ENCODE measurements at regions of chr4 and their contacts with region 1.

Region 1: DNA sequence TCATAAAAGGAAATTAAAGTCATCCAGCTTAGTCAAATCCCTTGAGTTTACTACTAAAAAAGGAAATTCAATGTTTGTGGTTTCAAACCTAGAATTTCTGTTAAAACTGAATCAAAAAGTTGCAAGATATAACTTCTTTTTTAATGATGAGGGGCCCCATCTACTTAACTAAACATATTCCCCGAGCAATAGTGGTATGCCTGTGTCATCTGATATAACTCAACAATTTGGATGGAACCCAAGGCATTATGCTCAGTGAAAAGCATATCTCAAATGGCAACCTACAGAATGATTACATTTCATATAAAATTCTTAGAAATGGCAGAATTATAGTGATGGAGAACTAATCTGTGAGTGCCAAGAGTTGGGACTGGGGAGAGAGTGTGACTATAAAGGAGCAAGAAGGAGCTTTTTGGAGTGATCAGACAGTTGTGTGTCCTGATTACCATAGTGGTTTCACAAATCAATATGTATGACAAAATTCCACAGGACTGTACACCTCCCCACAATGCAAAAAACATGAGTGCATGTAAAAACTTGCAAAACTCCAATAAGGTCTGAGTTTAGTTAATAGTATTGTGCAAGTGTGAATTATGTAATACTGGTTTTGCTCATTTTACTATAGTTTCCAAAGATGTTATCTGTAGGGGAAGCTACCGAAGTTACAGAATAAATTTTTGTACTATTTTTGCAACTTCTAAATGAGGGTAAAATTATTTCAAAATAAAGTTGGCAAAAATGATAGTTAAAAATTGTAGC is 323.2 kb downstream of the ARHGAP24 start:
- DNase-seq: peak; percentile 65
- H3K4me3 Mint-ChIP-seq: no peak overlapping the region
- H3K27ac Mint-ChIP-seq: no peak overlapping the region
- H3K4me1 Mint-ChIP-seq: peaks cover 7% of the 10 kb centered on the region
- H3K27me3 Mint-ChIP-seq: no peaks in the 10 kb centered on the region
- CTCF ChIP-seq: no peak

Region 2: GRCh38 chr4:85543832-85544231 is 254.4 kb before region 1 on chr4:
- CTCF ChIA-PET with region 1: no interaction called
- POLR2A ChIA-PET with region 1: no interaction called
- intact Hi-C with region 1: no loop called
- DNase-seq: peak; percentile 11
- H3K4me3 Mint-ChIP-seq: no peak overlapping the region
- H3K27ac Mint-ChIP-seq: no peak overlapping the region
- H3K4me1 Mint-ChIP-seq: peaks cover 11% of the 10 kb centered on the region
- H3K27me3 Mint-ChIP-seq: no peaks in the 10 kb centered on the region
- CTCF ChIP-seq: no peak

Region 3: DNA sequence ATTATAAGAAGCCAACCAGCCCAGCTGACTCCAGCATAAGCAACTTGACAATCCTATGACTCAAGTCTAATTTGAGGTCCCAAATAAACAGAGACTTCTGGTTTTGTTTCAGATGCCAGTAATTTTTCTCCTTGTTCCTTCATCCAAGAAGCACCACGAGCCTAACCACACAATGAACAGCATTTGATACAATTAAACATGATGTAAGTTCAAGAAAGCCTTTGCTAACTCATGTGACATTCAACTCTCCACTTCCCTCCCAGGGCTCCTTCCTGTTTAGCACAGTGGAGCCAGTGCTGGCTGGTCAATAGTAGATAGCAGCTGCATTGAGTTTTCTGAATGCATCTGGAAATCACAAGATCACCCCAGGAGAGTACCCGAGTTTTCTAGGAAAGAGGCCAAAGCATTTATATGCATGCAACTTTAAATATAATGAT is 117.0 kb before region 1 on chr4:
- CTCF ChIA-PET with region 1: no interaction called
- POLR2A ChIA-PET with region 1: no interaction called
- intact Hi-C with region 1: no loop called
- DNase-seq: peak; percentile 24
- H3K4me3 Mint-ChIP-seq: no peak overlapping the region
- H3K27ac Mint-ChIP-seq: peak overlapping the region; percentile 54
- H3K4me1 Mint-ChIP-seq: peaks cover 6% of the 10 kb centered on the region
- H3K27me3 Mint-ChIP-seq: no peaks in the 10 kb centered on the region
- CTCF ChIP-seq: no peak

Region 4: GRCh38 chr4:85772470-85772869 is 25.7 kb before region 1 on chr4:
- CTCF ChIA-PET with region 1: interaction called, 34 read pairs
- POLR2A ChIA-PET with region 1: no interaction called
- intact Hi-C with region 1: no loop called
- DNase-seq: no peak
- H3K4me3 Mint-ChIP-seq: no peak overlapping the region
- H3K27ac Mint-ChIP-seq: no peak overlapping the region
- H3K4me1 Mint-ChIP-seq: peaks cover 6% of the 10 kb centered on the region
- H3K27me3 Mint-ChIP-seq: no peaks in the 10 kb centered on the region
- CTCF ChIP-seq: no peak

Region 5: GRCh38 chr4:85787138-85787537 is 11.1 kb before region 1 on chr4:
- CTCF ChIA-PET with region 1: interaction called, 36 read pairs
- POLR2A ChIA-PET with region 1: interaction called, 11 read pairs
- intact Hi-C with region 1: no loop called
- DNase-seq: peak; percentile 72
- H3K4me3 Mint-ChIP-seq: no peak overlapping the region
- H3K27ac Mint-ChIP-seq: peak overlapping the region; percentile 21
- H3K4me1 Mint-ChIP-seq: peaks cover 21% of the 10 kb centered on the region
- H3K27me3 Mint-ChIP-seq: no peaks in the 10 kb centered on the region
- CTCF ChIP-seq: no peak

Region 6: GRCh38 chr4:85821688-85822455 is 23.7 kb after region 1 on chr4:
- CTCF ChIA-PET with region 1: interaction called, 13 read pairs
- POLR2A ChIA-PET with region 1: no interaction called
- intact Hi-C with region 1: no loop called
- DNase-seq: no peak
- H3K4me3 Mint-ChIP-seq: no peak overlapping the region
- H3K27ac Mint-ChIP-seq: no peak overlapping the region
- H3K4me1 Mint-ChIP-seq: peaks cover 31% of the 10 kb centered on the region
- H3K27me3 Mint-ChIP-seq: no peaks in the 10 kb centered on the region
- CTCF ChIP-seq: no peak

Region 7: GRCh38 chr4:85883180-85883579 is 85.0 kb after region 1 on chr4:
- CTCF ChIA-PET with region 1: no interaction called
- POLR2A ChIA-PET with region 1: no interaction called
- intact Hi-C with region 1: no loop called
- DNase-seq: no peak
- H3K4me3 Mint-ChIP-seq: no peak overlapping the region
- H3K27ac Mint-ChIP-seq: no peak overlapping the region
- H3K4me1 Mint-ChIP-seq: no peaks in the 10 kb centered on the region
- H3K27me3 Mint-ChIP-seq: no peaks in the 10 kb centered on the region
- CTCF ChIP-seq: no peak

Region 8: DNA sequence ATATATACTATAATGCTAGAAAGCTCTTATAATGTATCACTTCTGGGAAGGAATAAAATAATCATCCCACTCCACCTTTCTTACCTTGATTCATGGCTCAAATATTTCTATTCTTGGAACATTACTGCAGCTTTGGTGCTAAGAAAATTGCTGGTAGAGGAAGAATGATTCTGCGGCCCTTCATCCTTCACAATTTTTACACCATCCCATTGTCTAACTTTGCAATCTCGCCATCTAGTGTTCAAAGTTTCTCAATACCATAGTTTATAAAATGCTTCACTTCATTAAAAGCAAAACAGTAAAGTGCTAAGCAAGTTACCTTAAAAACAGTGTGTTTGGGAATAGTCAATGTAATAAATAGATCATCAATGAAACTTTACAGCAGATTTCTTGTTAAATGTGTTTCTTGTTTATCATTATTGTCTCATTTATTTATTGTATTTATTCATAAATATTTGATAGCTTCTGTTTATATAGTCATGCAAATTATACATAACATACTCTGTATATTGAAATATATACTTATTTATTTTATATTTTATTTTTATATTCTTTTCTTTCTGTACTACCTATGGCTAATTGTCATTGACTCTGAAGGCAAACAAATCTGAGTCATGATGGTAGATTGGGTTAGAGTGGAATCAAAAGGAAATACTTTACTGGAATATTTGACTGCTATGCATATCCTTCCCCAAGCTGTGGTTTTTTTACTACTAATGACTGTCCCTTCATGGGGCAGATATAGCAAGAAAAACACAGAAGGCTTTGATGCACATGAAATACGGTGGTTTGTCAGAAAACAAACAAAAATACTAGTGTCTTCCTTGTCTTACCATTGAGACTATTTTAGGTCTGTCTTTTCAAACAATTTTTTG is 171.0 kb after region 1 on chr4:
- CTCF ChIA-PET with region 1: interaction called, 33 read pairs
- POLR2A ChIA-PET with region 1: interaction called, 5 read pairs
- intact Hi-C with region 1: loop called (anchors 1 kb)
- DNase-seq: peak; percentile 73
- H3K4me3 Mint-ChIP-seq: no peak overlapping the region
- H3K27ac Mint-ChIP-seq: no peak overlapping the region
- H3K4me1 Mint-ChIP-seq: peaks cover 5% of the 10 kb centered on the region
- H3K27me3 Mint-ChIP-seq: no peaks in the 10 kb centered on the region
- CTCF ChIP-seq: peak; percentile 46

Region 9: GRCh38 chr4:86043755-86044592 is 245.8 kb after region 1 on chr4:
- CTCF ChIA-PET with region 1: interaction called, 53 read pairs
- POLR2A ChIA-PET with region 1: no interaction called
- intact Hi-C with region 1: loop called (anchors 1 kb)
- DNase-seq: peak; percentile 71
- H3K4me3 Mint-ChIP-seq: no peak overlapping the region
- H3K27ac Mint-ChIP-seq: no peak overlapping the region
- H3K4me1 Mint-ChIP-seq: peaks cover 5% of the 10 kb centered on the region
- H3K27me3 Mint-ChIP-seq: no peaks in the 10 kb centered on the region
- CTCF ChIP-seq: peak; percentile 66

Measured in MCF 10A (cell line).